HCT116 (cell line): ENCODE measurements at regions of chr13 and their contacts with region 1.

Region 1: GRCh38 chr13:108996430-108996829 is 367.0 kb downstream of the MYO16 start:
- DNase-seq: no peak
- ATAC-seq: no peak
- H3K4me3 ChIP-seq: no peak overlapping the region
- H3K27ac ChIP-seq: no peak overlapping the region
- H3K4me1 ChIP-seq: no peaks in the 10 kb centered on the region; a peak in 1 of 4 replicates
- H3K27me3 ChIP-seq: no peaks in the 10 kb centered on the region
- CTCF ChIP-seq: no peak
- POLR2A ChIP-seq: no peak
- RAD21 ChIP-seq: no peak

Region 2: DNA sequence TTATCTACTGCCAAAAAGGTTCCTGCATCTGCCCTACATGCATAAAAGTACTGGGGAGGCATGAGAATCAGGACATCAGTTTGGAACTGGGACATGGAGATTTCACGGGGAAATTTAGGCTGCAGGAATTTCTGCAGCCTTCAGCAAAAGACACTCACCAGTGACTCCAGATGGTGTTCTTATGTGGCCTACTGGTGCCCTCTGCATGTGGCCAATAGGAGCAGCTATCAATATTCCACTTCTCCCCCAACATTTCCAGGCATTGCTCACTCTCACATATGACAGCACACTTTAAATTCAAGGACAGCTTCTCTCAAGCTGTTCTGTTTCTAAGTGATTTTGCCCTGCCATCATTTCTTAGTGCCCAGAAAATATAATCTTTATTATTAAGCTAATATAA is 1857.9 kb before region 1 on chr13:
- CTCF ChIA-PET with region 1: no interaction called
- POLR2A ChIA-PET with region 1: no interaction called
- RAD21 ChIA-PET with region 1: no interaction called
- intact Hi-C with region 1: no loop called
- DNase-seq: no peak
- ATAC-seq: no peak
- H3K4me3 ChIP-seq: no peak overlapping the region
- H3K27ac ChIP-seq: no peak overlapping the region
- H3K4me1 ChIP-seq: no peaks in the 10 kb centered on the region
- H3K27me3 ChIP-seq: no peaks in the 10 kb centered on the region
- CTCF ChIP-seq: no peak
- POLR2A ChIP-seq: no peak
- RAD21 ChIP-seq: no peak

Region 3: DNA sequence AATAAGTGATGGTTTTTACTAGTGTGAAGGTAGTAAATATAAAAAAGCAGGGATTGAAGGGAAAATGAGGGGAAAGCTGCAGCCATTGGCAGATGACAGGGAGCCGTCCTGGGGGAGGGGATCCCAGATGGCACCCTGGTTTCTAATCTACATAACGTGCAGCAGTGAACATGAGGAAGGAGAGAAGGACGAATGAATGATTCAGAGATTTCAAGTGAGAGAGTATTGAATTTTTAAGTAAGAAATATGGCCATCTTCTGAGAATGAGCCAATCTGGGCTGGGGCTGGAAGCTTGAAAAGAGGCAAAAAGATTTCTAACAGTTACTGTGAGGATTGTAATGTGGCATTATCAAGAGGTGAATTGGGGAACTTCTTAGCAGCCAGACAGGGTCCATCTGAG is 47.2 kb after region 1 on chr13:
- CTCF ChIA-PET with region 1: no interaction called
- POLR2A ChIA-PET with region 1: no interaction called
- RAD21 ChIA-PET with region 1: no interaction called
- intact Hi-C with region 1: loop called (anchors 5 kb)
- DNase-seq: no peak
- ATAC-seq: no peak
- H3K4me3 ChIP-seq: no peak overlapping the region
- H3K27ac ChIP-seq: no peak overlapping the region
- H3K4me1 ChIP-seq: no peaks in the 10 kb centered on the region
- H3K27me3 ChIP-seq: no peaks in the 10 kb centered on the region
- CTCF ChIP-seq: no peak
- POLR2A ChIP-seq: no peak
- RAD21 ChIP-seq: no peak

Region 4: DNA sequence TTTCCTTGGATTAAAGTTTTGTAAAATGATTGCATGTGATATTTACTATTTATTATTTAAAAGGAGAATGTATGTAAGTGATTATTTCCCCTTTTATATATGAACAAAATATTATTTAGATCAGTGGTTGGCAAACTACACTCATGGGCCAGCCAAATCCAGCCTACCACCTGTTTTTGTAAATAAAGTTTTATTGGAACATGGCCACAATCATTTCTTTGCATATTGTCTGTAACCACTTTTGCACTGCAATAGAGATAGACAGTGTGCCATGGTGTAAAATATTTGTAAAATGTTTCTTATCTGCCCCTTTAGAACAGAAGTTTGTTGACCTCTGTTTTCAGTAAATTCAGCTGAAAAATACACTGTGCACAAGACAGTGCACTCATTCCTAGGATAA is 59.4 kb after region 1 on chr13:
- CTCF ChIA-PET with region 1: no interaction called
- POLR2A ChIA-PET with region 1: no interaction called
- RAD21 ChIA-PET with region 1: no interaction called
- intact Hi-C with region 1: no loop called
- DNase-seq: no peak
- ATAC-seq: no peak
- H3K4me3 ChIP-seq: no peak overlapping the region
- H3K27ac ChIP-seq: no peak overlapping the region
- H3K4me1 ChIP-seq: no peaks in the 10 kb centered on the region
- H3K27me3 ChIP-seq: no peaks in the 10 kb centered on the region
- CTCF ChIP-seq: no peak
- POLR2A ChIP-seq: no peak
- RAD21 ChIP-seq: no peak

Region 5: GRCh38 chr13:109576309-109576813 is 579.9 kb after region 1 on chr13:
- CTCF ChIA-PET with region 1: no interaction called
- POLR2A ChIA-PET with region 1: no interaction called
- RAD21 ChIA-PET with region 1: no interaction called
- intact Hi-C with region 1: no loop called
- DNase-seq: no peak
- ATAC-seq: no peak
- H3K4me3 ChIP-seq: no peak overlapping the region
- H3K27ac ChIP-seq: no peak overlapping the region
- H3K4me1 ChIP-seq: no peaks in the 10 kb centered on the region
- H3K27me3 ChIP-seq: no peaks in the 10 kb centered on the region
- CTCF ChIP-seq: no peak
- POLR2A ChIP-seq: no peak
- RAD21 ChIP-seq: no peak